Common myeloid progenitor, CD34-positive (primary cell): ENCODE measurements at regions of chr15 and their contacts with region 1.

Region 1: GRCh38 chr15:89057504-89058133 is 30.6 kb upstream of the ABHD2 start:
- DNase-seq: peak; percentile 74 to 84 (median 81)
- H3K4me3 ChIP-seq: no peak overlapping the region
- H3K27ac ChIP-seq: no peak overlapping the region
- H3K4me1 ChIP-seq: peaks cover under 1 to 5% (median 2%) of the 10 kb centered on the region in 4 experiments
- H3K27me3 ChIP-seq: no peaks in the 10 kb centered on the region

Region 2: DNA sequence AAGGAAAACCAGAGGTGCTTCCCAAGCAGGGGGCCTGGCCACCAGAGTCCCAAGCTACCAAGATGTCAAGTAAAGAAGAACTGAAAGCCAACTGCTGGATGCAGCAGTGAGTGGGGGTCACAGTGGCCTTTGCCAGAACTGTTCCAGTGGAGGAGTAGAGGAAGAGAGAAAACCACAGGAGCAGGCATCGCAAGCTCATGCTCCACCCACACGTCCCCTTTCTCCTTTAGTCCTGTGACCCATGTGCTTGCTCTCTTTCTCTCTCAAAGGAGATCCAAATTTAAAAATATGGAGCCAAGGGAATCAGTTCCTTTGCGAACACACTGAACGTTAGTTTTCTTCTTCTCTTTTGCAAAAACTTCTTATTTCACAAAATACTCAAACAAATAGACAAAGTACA is 18.2 kb after region 1 on chr15:
- CTCF ChIA-PET with region 1: interaction called, 15 read pairs
- POLR2A ChIA-PET with region 1: interaction called, 3 read pairs
- DNase-seq: no peak
- H3K4me3 ChIP-seq: peak overlapping the region in 1 of 7 experiments; percentile 48
- H3K27ac ChIP-seq: peak overlapping the region in 1 of 2 experiments; percentile 29
- H3K4me1 ChIP-seq: peaks cover 0 to 38% (median 22%) of the 10 kb centered on the region in 4 experiments
- H3K27me3 ChIP-seq: no peaks in the 10 kb centered on the region

Region 3: GRCh38 chr15:89101302-89102191 is 43.9 kb after region 1 on chr15:
- CTCF ChIA-PET with region 1: interaction called, 10 read pairs
- POLR2A ChIA-PET with region 1: no interaction called
- DNase-seq: peak in 1 of 3 donors; percentile 44
- H3K4me3 ChIP-seq: no peak overlapping the region
- H3K27ac ChIP-seq: no peak overlapping the region
- H3K4me1 ChIP-seq: peaks cover 0 to 15% (median 5%) of the 10 kb centered on the region in 4 experiments
- H3K27me3 ChIP-seq: no peaks in the 10 kb centered on the region

Region 4: GRCh38 chr15:89129123-89129815 is 71.7 kb after region 1 on chr15:
- CTCF ChIA-PET with region 1: interaction called, 34 read pairs
- POLR2A ChIA-PET with region 1: no interaction called
- DNase-seq: peak in 2 of 3 donors; percentile 46 to 59
- H3K4me3 ChIP-seq: no peak overlapping the region
- H3K27ac ChIP-seq: peak overlapping the region in 1 of 2 experiments; percentile 59
- H3K4me1 ChIP-seq: peaks cover 35 to 61% (median 58%) of the 10 kb centered on the region in 4 experiments
- H3K27me3 ChIP-seq: no peaks in the 10 kb centered on the region

Region 5: DNA sequence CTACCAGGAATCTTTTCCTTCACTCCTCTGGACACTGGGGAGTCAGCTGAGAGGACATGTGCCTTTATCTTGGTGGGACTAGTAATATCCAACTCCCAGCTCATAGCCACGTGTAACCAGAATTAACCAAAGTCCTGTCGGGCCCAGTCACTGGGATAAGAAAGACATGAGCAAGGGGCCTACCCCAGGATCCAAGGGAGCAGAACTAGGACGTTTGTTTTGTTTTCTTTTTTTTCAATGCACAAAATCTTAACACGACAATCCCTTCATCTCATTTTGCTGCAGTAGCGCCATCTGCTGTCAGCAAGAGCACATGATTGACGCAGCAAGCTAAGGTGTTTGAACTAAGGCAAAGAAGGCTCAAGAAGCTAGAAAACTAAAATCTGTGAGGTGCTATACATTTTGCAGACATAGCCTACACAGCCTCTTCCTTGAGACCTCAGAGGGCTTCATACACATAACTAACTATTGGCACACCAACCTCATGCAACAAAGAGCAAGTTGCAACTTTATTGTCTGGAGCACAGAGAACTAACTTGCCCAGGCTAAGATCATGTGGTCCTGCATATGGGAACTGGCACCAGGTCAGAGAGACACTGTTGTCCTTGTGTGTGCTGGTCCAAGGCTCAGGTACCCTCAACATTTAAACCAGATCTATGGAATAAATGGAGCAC is 120.2 kb after region 1 on chr15:
- CTCF ChIA-PET with region 1: interaction called, 361 read pairs
- POLR2A ChIA-PET with region 1: no interaction called
- DNase-seq: peak; percentile 79 to 91 (median 85)
- H3K4me3 ChIP-seq: no peak overlapping the region
- H3K27ac ChIP-seq: no peak overlapping the region
- H3K4me1 ChIP-seq: peaks cover 0 to 6% (median 0%) of the 10 kb centered on the region in 4 experiments
- H3K27me3 ChIP-seq: no peaks in the 10 kb centered on the region

Region 6: DNA sequence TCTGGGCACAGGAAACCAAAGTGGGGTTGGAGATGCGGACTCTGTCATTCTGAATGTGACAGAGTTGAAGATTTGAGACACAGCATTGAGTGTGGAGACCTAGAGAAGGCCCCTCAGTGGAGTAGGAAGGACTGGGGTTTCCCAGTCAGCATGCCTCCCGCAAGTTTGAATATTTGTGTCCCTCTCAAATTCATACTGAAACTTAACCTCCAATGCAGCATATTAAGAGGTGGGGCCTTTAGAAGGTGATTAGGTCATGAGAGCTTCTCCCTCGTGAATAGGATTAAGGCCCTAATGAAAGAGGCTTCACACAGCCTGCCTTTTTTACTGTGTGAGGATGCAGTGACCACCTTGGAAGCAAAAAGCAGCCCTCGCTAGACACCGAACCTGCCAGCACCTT is 1866.8 kb after region 1 on chr15:
- CTCF ChIA-PET with region 1: no interaction called
- POLR2A ChIA-PET with region 1: no interaction called
- DNase-seq: no peak
- H3K4me3 ChIP-seq: no peak overlapping the region
- H3K27ac ChIP-seq: no peak overlapping the region
- H3K4me1 ChIP-seq: peaks cover 4 to 11% (median 10%) of the 10 kb centered on the region in 4 experiments
- H3K27me3 ChIP-seq: no peaks in the 10 kb centered on the region